CD4-positive, alpha-beta memory T cell (primary cell): ENCODE measurements at regions of chr1 and their contacts with region 1.

Region 1: DNA sequence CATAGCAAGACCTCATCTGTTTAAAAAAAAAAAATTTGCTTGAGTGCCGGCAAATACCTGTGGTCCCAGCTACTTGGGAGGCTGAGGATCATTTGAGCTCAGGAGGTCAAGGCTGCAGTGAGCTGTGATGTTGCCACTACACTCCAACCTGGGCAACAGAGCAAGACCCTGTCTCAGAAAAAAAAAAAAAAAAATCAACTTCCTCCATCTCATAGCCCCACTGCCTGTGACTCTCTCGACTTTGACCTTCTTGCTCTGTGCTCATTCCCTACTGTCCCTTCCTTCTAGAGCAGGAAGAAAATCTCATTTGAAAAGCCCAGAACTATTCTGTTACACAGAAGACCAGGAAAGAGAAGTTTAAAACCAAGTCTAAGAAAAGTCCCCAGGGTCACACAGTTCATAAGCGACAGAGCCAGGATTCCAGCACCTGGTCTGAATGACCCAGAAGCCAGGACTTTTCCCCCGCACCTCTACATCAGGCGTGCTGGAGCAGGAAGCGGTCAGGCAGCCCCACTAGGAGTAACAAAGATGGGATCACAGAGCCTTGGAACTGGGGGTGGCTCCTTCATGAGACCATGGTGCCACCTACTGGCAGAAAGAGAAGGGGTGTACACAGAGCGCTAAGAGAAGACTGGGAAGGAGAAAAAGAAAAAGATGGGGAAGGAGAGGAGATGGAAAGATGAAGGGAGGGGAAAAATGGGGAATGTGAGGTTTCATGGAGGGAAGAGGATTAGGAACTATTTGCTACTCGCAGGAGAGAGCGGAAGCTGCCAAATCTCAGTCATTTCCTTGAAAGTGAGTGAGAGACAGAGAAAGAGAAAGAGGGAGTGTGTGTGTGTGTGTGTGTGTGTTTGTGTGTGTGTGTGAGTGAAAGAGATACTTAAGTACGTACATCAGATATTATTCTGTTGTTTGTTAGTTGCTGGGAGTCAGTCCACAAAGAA is 3.1 kb upstream of the P3R3URF start:
- DNase-seq: peak; percentile 51 to 66 (median 55)
- H3K4me3 ChIP-seq: no peak overlapping the region
- H3K4me3 Mint-ChIP-seq: no peak overlapping the region
- H3K27ac ChIP-seq: no peak overlapping the region
- H3K27ac Mint-ChIP-seq: no peak overlapping the region
- H3K4me1 ChIP-seq: no peaks in the 10 kb centered on the region
- H3K4me1 Mint-ChIP-seq: peaks cover 0 to 3% (median under 1%) of the 10 kb centered on the region in 4 donors
- H3K27me3 ChIP-seq: no peaks in the 10 kb centered on the region
- H3K27me3 Mint-ChIP-seq: no peaks in the 10 kb centered on the region

Region 2: GRCh38 chr1:46036894-46037839 is 142.2 kb before region 1 on chr1:
- CTCF ChIA-PET with region 1: interaction called, 162 read pairs
- POLR2A ChIA-PET with region 1: interaction called, 4 read pairs
- intact Hi-C with region 1: loop called (anchors 1 kb)
- DNase-seq: peak; percentile 73 to 76 (median 75)
- H3K4me3 ChIP-seq: no peak overlapping the region
- H3K4me3 Mint-ChIP-seq: no peak overlapping the region
- H3K27ac ChIP-seq: no peak overlapping the region
- H3K27ac Mint-ChIP-seq: no peak overlapping the region
- H3K4me1 ChIP-seq: no peaks in the 10 kb centered on the region
- H3K4me1 Mint-ChIP-seq: no peaks in the 10 kb centered on the region
- H3K27me3 ChIP-seq: no peaks in the 10 kb centered on the region
- H3K27me3 Mint-ChIP-seq: no peaks in the 10 kb centered on the region

Region 3: GRCh38 chr1:46166521-46167462 is 12.6 kb before region 1 on chr1:
- CTCF ChIA-PET with region 1: interaction called, 15 read pairs
- POLR2A ChIA-PET with region 1: no interaction called
- intact Hi-C with region 1: no loop called
- DNase-seq: peak; percentile 29 to 45 (median 41)
- H3K4me3 ChIP-seq: peak overlapping the region; percentile 62 to 70
- H3K4me3 Mint-ChIP-seq: peak overlapping the region; percentile 88 to 95 (median 92)
- H3K27ac ChIP-seq: peak overlapping the region; percentile 47
- H3K27ac Mint-ChIP-seq: peak overlapping the region; percentile 63 to 96 (median 93)
- H3K4me1 ChIP-seq: peaks cover 16% of the 10 kb centered on the region
- H3K4me1 Mint-ChIP-seq: peaks cover 7 to 19% (median 13%) of the 10 kb centered on the region in 4 donors
- H3K27me3 ChIP-seq: no peaks in the 10 kb centered on the region
- H3K27me3 Mint-ChIP-seq: peaks cover 4% of the 10 kb centered on the region in 2 donors

Region 4: GRCh38 chr1:46197964-46198811 is 18.8 kb after region 1 on chr1 and contains the start of gene POMGNT1:
- CTCF ChIA-PET with region 1: interaction called, 13 read pairs
- POLR2A ChIA-PET with region 1: no interaction called
- intact Hi-C with region 1: no loop called
- DNase-seq: peak; percentile 69 to 81 (median 78)
- H3K4me3 ChIP-seq: peak within 1 kb of the TSS; percentile 78 to 86
- H3K4me3 Mint-ChIP-seq: peak within 1 kb of the TSS; percentile 83 to 89 (median 88)
- H3K27ac ChIP-seq: peak within 1 kb of the TSS; percentile 76
- H3K27ac Mint-ChIP-seq: peak within 1 kb of the TSS; percentile 38 to 88 (median 79)
- H3K4me1 ChIP-seq: peaks cover 33% of the 10 kb centered on the region
- H3K4me1 Mint-ChIP-seq: peaks cover 12 to 39% (median 25%) of the 10 kb centered on the region in 4 donors
- H3K27me3 ChIP-seq: no peaks in the 10 kb centered on the region
- H3K27me3 Mint-ChIP-seq: peaks cover 0 to 1% of the 10 kb centered on the region in 2 donors
- total RNA-seq, gene POMGNT1: 36.0 to 41.4 TPM

Region 5: GRCh38 chr1:46317323-46317722 is 137.9 kb after region 1 on chr1:
- CTCF ChIA-PET with region 1: no interaction called
- POLR2A ChIA-PET with region 1: no interaction called
- intact Hi-C with region 1: no loop called
- DNase-seq: no peak
- H3K4me3 ChIP-seq: no peak overlapping the region
- H3K4me3 Mint-ChIP-seq: no peak overlapping the region
- H3K27ac ChIP-seq: no peak overlapping the region
- H3K27ac Mint-ChIP-seq: no peak overlapping the region
- H3K4me1 ChIP-seq: no peaks in the 10 kb centered on the region
- H3K4me1 Mint-ChIP-seq: no peaks in the 10 kb centered on the region
- H3K27me3 ChIP-seq: no peaks in the 10 kb centered on the region
- H3K27me3 Mint-ChIP-seq: no peaks in the 10 kb centered on the region